GM10248 (cell line): ENCODE measurements at regions of chr3 and their contacts with region 1.

Region 1: DNA sequence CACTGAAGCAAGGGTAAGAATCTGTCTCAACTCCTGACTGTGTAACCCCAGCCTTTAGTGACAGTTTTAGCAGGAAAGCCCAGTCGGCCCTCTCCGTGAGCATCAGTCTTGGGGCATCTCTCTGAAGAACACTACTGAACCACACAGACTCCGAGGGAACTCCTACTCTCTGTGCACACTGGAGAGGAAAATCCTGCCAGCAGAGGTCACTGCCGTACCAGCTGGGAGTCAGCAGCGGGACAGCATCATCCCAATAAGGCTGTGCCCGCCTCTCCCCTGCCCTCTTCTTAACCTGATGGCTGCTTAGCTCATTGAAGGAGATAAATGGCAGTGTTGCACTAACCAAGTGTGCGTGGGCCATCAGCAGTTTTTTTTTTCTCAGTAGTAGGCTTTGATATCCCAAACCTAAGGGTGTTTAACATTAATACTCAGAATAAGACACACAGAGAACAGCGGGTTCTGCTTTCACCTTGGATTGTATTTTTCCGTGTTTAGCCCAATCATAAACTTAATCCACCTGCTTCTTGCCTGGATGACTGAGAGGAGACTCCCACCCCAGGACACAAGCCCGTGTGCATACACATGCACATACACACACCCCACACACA is 26.6 kb upstream of the RASA2 start:
- DNase-seq: peak; percentile 81
- CTCF ChIP-seq: peak; percentile 86

Region 2: GRCh38 chr3:141487521-141488252 is 27.5 kb after region 1 on chr3:
- CTCF ChIA-PET with region 1: interaction called, 10 read pairs
- POLR2A ChIA-PET with region 1: no interaction called
- DNase-seq: peak; percentile 77
- CTCF ChIP-seq: no peak

Region 3: DNA sequence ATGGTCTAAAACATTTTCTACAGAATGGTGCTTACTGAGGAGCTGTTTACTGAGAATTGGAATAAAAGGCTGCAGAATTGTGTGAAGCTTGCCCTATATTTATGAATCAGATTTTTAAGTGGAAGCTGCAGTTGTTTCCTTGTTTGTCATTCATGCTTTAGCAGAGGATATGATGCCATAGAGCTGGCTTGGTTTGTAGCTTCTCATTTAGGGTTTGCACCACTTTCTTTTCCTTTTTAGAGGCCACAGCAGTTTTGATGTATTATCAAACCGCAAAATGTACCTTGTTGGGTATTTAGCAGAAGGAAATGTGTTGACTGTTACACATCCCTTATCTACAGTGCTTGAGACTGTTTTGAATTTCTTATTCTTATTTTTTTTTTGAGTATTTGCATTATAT is 92.9 kb after region 1 on chr3:
- CTCF ChIA-PET with region 1: interaction called, 205 read pairs
- POLR2A ChIA-PET with region 1: no interaction called
- DNase-seq: no peak
- CTCF ChIP-seq: no peak

Region 4: DNA sequence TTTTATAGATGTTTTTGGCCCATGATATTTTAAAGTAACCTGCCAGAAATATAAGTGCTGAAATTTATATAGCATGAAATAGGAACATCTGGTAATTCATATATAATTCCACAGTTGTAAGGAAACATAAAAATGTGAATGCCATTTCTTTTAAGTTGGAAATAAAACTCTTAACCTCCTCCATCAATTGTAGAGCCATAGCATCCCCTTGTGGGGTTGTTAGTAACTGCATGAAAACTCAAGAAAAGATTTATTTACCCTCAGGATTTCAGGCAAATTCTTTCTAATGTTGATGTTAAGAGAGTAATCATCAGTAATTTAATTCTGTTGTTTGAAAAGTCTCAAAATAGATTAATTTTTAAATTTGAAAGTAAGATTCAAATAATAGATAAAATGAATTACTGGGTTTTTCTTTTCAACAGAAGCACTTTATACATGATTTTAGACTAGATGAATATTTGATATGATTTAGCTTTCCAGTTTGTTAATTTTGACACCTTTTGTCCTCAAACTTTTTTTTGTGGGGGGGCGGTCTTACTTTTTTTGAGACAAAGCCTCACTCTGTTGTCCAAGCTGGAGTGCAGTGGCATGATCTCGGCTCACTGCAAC is 101.3 kb after region 1 on chr3:
- CTCF ChIA-PET with region 1: interaction called, 205 read pairs
- POLR2A ChIA-PET with region 1: no interaction called
- DNase-seq: peak; percentile 27
- CTCF ChIP-seq: peak; percentile 86

Region 5: DNA sequence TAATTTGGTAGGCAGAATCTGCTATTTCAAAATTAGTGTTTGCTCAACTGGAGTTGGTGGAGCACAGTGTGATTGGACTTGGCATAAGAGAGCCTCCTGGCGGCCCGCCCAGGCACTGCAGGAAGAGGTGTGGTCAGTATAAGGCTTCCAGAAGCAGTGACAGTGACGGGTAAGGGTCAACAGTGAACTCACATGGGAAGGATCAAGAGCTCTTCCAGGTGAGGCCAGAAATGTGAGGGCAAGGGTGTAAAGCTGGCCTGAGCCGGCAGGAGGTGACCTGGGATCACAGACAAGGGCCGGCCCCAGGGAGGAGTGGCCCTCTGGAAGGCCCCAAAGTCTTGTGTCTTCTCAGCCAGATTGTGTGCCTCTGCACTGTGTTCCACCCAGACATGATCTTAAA is 184.7 kb after region 1 on chr3:
- CTCF ChIA-PET with region 1: interaction called, 10 read pairs
- POLR2A ChIA-PET with region 1: no interaction called
- DNase-seq: peak; percentile 79
- CTCF ChIP-seq: peak; percentile 83